ENCODE measurements at regions of chrX and their contacts with region 1.

Region 1: DNA sequence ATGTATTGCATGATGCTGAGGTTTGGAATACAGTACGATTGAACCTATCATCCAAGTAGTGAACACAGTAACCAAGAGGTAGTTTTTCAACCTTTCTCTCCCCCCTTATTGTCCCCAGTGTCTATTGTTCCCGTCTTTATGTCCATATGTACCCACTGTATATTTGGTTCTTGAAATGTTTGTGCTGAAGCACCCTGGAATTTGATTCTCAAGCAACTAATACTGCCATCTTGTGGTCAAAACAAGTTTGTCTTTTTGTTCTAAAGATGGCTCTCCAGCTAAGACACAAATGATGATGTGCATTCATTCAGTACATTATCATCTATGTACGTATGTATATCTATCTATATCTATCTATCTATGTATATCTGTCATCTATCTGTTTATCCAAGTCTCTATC is 33.5 kb upstream of the DCX start:
- DNase-seq: peak in 1 of 2 experiments; percentile 18
- H3K4me3 ChIP-seq: no peak overlapping the region
- H3K4me3 Mint-ChIP-seq: no peak overlapping the region
- H3K27ac Mint-ChIP-seq: no peak overlapping the region
- H3K4me1 ChIP-seq: no peaks in the 10 kb centered on the region
- H3K4me1 Mint-ChIP-seq: no peaks in the 10 kb centered on the region
- H3K27me3 ChIP-seq: no peaks in the 10 kb centered on the region
- H3K27me3 Mint-ChIP-seq: no peaks in the 10 kb centered on the region
- CTCF ChIP-seq: peak; percentile 31 to 42

Region 2: GRCh38 chrX:110992611-110993010 is 452.9 kb before region 1 on chrX:
- CTCF ChIA-PET with region 1: no interaction called
- POLR2A ChIA-PET with region 1: no interaction called
- intact Hi-C with region 1: loop called (anchors 5 kb)
- DNase-seq: peak; percentile 32
- H3K4me3 ChIP-seq: no peak overlapping the region
- H3K4me3 Mint-ChIP-seq: no peak overlapping the region
- H3K27ac Mint-ChIP-seq: no peak overlapping the region
- H3K4me1 ChIP-seq: no peaks in the 10 kb centered on the region
- H3K4me1 Mint-ChIP-seq: no peaks in the 10 kb centered on the region
- H3K27me3 ChIP-seq: no peaks in the 10 kb centered on the region
- H3K27me3 Mint-ChIP-seq: peaks cover 9% of the 10 kb centered on the region
- CTCF ChIP-seq: peak in 1 of 2 experiments; percentile 55

Region 3: GRCh38 chrX:111270339-111270738 is 175.1 kb before region 1 on chrX and contains the start of gene CAPN6:
- CTCF ChIA-PET with region 1: no interaction called
- POLR2A ChIA-PET with region 1: no interaction called
- intact Hi-C with region 1: no loop called
- DNase-seq: peak; percentile 16 to 32
- H3K4me3 ChIP-seq: no peak within 1 kb of the TSS
- H3K4me3 Mint-ChIP-seq: peak within 1 kb of the TSS; percentile 62
- H3K27ac Mint-ChIP-seq: no peak within 1 kb of the TSS
- H3K4me1 ChIP-seq: no peaks in the 10 kb centered on the region
- H3K4me1 Mint-ChIP-seq: no peaks in the 10 kb centered on the region
- H3K27me3 ChIP-seq: no peaks in the 10 kb centered on the region
- H3K27me3 Mint-ChIP-seq: peaks cover 11% of the 10 kb centered on the region
- CTCF ChIP-seq: no peak
- total RNA-seq, gene CAPN6: 5.2 and 5.7 TPM in 2 replicates

Region 4: GRCh38 chrX:111360839-111361238 is 84.6 kb before region 1 on chrX:
- CTCF ChIA-PET with region 1: no interaction called
- POLR2A ChIA-PET with region 1: no interaction called
- intact Hi-C with region 1: loop called (anchors 5 kb)
- DNase-seq: peak in 1 of 2 experiments; percentile 4
- H3K4me3 ChIP-seq: no peak overlapping the region
- H3K4me3 Mint-ChIP-seq: no peak overlapping the region
- H3K27ac Mint-ChIP-seq: no peak overlapping the region
- H3K4me1 ChIP-seq: no peaks in the 10 kb centered on the region
- H3K4me1 Mint-ChIP-seq: no peaks in the 10 kb centered on the region
- H3K27me3 ChIP-seq: no peaks in the 10 kb centered on the region
- H3K27me3 Mint-ChIP-seq: no peaks in the 10 kb centered on the region
- CTCF ChIP-seq: no peak

Region 5: DNA sequence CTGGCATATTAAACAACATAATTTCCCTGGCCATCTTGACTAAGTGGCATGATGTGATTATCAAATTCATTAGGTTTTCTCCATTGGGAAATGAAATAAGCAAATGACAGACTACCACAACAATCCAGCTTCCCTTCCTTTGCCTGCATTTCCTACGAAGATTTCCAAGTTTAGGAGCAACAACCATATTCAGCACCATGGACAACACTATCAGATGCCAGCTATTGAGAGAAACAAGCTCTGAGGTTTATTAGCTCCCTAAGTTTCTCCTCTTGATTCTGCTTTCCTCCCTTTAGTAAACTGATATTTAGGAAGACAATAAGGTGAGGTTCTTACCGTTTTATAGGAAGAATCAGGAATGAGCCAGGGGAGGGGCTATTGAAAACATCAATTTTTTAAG is 69.7 kb before region 1 on chrX:
- CTCF ChIA-PET with region 1: no interaction called
- POLR2A ChIA-PET with region 1: no interaction called
- intact Hi-C with region 1: loop called (anchors 5 kb)
- DNase-seq: peak in 1 of 2 experiments; percentile 1
- H3K4me3 ChIP-seq: no peak overlapping the region
- H3K4me3 Mint-ChIP-seq: no peak overlapping the region
- H3K27ac Mint-ChIP-seq: no peak overlapping the region
- H3K4me1 ChIP-seq: no peaks in the 10 kb centered on the region
- H3K4me1 Mint-ChIP-seq: no peaks in the 10 kb centered on the region
- H3K27me3 ChIP-seq: no peaks in the 10 kb centered on the region
- H3K27me3 Mint-ChIP-seq: no peaks in the 10 kb centered on the region
- CTCF ChIP-seq: no peak

Region 6: GRCh38 chrX:111652719-111653118 is 207.2 kb after region 1 on chrX:
- CTCF ChIA-PET with region 1: no interaction called
- POLR2A ChIA-PET with region 1: no interaction called
- intact Hi-C with region 1: loop called (anchors 2 kb)
- DNase-seq: no peak
- H3K4me3 ChIP-seq: no peak overlapping the region
- H3K4me3 Mint-ChIP-seq: no peak overlapping the region
- H3K27ac Mint-ChIP-seq: no peak overlapping the region
- H3K4me1 ChIP-seq: no peaks in the 10 kb centered on the region
- H3K4me1 Mint-ChIP-seq: no peaks in the 10 kb centered on the region
- H3K27me3 ChIP-seq: no peaks in the 10 kb centered on the region
- H3K27me3 Mint-ChIP-seq: no peaks in the 10 kb centered on the region
- CTCF ChIP-seq: no peak